Endothelial cell of umbilical vein (primary cell): ENCODE measurements at regions of chr5 and their contacts with region 1.

Region 1: DNA sequence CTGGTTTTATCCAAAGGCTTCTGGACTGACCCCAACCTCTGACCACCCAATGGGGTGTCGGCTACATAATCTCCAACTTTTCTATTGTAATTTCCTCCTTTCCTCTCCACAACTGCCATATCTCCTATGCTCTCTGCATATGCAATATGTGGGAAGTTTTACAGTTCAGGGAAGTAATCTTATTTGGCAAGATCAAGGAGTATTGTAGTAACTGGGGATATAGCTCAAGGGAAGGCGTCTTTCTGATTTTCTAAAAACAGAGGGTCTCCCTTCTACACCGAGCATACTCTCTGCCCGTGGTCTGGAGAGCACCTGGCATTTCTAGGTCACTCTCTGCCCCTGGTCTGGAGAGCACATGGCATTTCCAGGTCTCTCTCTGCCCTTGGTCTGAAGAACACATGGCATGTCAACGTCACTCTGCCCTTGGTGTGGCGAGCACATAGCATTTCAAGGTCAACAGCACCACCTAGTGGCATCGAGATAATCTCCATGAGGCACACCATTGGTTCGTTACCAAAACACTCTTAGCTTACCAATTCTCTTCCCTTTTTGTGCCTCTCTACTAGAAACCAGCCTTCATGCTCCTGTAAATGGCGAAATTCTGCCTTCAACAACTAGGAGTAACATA is 616.4 kb upstream of the NUDT12 start:
- DNase-seq: peak; percentile 64
- H3K4me3 ChIP-seq: no peak overlapping the region
- H3K27ac ChIP-seq: no peak overlapping the region
- H3K4me1 ChIP-seq: no peaks in the 10 kb centered on the region
- H3K27me3 ChIP-seq: no peaks in the 10 kb centered on the region
- CTCF ChIP-seq: peak; percentile 59 to 63
- POLR2A ChIP-seq: no peak

Region 2: DNA sequence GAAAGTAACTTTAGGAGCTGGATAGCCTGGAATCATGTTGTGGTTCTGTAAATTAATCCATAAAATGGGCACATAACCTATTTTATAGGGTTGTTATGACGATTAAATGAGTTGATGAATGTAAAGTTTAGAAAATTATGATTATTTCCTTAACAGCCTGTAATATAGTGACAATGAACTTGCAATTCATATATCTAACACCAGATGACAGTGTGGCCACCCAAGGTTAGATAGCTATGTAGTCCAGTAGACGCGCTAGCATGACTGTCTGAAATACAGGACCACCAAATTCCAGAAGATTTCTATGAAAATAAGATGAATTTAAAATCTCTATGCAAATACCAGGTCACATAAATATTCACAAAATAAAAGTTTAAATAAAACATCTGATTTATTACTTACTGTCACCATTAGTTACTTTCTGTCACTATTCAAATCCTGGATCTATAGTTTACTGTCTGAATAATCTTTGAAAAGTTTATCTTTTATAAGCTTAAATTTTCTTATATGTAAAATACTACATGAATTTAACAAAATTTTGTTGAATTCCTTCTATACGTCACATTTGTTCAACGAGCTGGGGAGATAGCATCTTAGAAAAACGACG is 946.4 kb before region 1 on chr5:
- CTCF ChIA-PET with region 1: interaction called, 4 read pairs
- POLR2A ChIA-PET with region 1: no interaction called
- dilution Hi-C with region 1: no loop called
- intact Hi-C with region 1: loop called (anchors 2 kb)
- DNase-seq: peak; percentile 62
- H3K4me3 ChIP-seq: no peak overlapping the region
- H3K27ac ChIP-seq: no peak overlapping the region
- H3K4me1 ChIP-seq: no peaks in the 10 kb centered on the region
- H3K27me3 ChIP-seq: no peaks in the 10 kb centered on the region
- CTCF ChIP-seq: peak; percentile 57 to 68
- POLR2A ChIP-seq: no peak

Region 3: DNA sequence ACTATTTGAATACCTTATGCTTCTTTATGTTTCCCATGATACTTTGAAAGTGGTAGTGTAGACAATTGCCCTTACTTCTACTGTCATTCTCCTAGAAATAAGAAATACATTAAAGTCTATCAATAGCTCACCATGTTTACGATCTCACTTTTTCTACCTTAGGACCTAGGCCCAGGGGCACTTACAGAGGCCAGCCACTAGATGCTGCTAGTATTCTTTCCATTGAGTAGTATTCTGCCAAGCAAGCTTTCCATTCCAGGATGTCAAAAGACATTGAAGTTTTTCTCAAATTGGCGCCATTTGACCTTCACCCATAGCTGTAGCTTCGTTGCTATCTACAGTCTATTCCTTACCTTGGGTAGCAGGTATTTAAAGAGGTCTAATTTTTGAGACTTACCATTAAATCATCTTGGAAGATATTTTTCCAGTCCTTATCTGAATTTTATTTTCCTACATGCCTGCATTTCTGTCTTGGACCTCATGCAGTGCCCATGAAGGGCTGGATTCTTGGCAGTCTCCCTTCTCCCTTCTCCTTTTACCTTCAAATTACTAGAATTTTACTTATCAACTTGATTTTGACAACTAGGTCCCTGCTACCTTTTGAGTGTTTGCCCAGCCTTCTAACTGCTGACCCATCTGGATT is 370.4 kb before region 1 on chr5:
- CTCF ChIA-PET with region 1: interaction called, 40 read pairs
- POLR2A ChIA-PET with region 1: no interaction called
- dilution Hi-C with region 1: no loop called
- intact Hi-C with region 1: loop called (anchors 1 kb)
- DNase-seq: peak; percentile 48
- H3K4me3 ChIP-seq: no peak overlapping the region
- H3K27ac ChIP-seq: no peak overlapping the region
- H3K4me1 ChIP-seq: no peaks in the 10 kb centered on the region
- H3K27me3 ChIP-seq: no peaks in the 10 kb centered on the region
- CTCF ChIP-seq: peak; percentile 73
- POLR2A ChIP-seq: no peak

Region 4: GRCh38 chr5:103918668-103919367 is 260.1 kb before region 1 on chr5:
- CTCF ChIA-PET with region 1: no interaction called
- POLR2A ChIA-PET with region 1: no interaction called
- dilution Hi-C with region 1: no loop called
- intact Hi-C with region 1: no loop called
- DNase-seq: no peak
- H3K4me3 ChIP-seq: no peak overlapping the region
- H3K27ac ChIP-seq: no peak overlapping the region
- H3K4me1 ChIP-seq: no peaks in the 10 kb centered on the region
- H3K27me3 ChIP-seq: no peaks in the 10 kb centered on the region
- CTCF ChIP-seq: no peak
- POLR2A ChIP-seq: no peak

Region 5: DNA sequence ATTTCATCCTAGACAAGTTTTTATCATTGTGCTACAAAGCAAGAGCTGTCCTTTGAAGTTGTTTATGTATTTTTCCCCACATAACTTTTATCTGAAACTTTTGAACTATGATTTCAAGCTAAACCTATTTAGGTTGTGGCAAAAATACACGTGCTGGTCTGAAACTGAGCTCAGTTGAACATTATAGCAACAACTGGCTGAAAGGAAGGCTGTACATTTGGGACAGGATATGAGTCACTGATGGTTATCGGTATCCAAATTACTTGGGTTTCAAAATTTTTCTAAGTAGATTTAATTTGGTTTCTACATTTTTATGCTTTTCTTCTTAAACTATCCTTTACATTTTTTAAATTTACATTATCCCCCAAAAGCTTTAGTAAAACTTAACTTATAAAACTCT is 11.0 kb after region 1 on chr5:
- CTCF ChIA-PET with region 1: interaction called, 34 read pairs
- POLR2A ChIA-PET with region 1: no interaction called
- dilution Hi-C with region 1: no loop called
- intact Hi-C with region 1: no loop called
- DNase-seq: peak; percentile 79
- H3K4me3 ChIP-seq: no peak overlapping the region
- H3K27ac ChIP-seq: peak overlapping the region; percentile 36
- H3K4me1 ChIP-seq: peaks cover 17% of the 10 kb centered on the region
- H3K27me3 ChIP-seq: no peaks in the 10 kb centered on the region
- CTCF ChIP-seq: no peak
- POLR2A ChIP-seq: no peak